B cell (primary cell): ENCODE measurements at regions of chr1 and their contacts with region 1.

Region 1: DNA sequence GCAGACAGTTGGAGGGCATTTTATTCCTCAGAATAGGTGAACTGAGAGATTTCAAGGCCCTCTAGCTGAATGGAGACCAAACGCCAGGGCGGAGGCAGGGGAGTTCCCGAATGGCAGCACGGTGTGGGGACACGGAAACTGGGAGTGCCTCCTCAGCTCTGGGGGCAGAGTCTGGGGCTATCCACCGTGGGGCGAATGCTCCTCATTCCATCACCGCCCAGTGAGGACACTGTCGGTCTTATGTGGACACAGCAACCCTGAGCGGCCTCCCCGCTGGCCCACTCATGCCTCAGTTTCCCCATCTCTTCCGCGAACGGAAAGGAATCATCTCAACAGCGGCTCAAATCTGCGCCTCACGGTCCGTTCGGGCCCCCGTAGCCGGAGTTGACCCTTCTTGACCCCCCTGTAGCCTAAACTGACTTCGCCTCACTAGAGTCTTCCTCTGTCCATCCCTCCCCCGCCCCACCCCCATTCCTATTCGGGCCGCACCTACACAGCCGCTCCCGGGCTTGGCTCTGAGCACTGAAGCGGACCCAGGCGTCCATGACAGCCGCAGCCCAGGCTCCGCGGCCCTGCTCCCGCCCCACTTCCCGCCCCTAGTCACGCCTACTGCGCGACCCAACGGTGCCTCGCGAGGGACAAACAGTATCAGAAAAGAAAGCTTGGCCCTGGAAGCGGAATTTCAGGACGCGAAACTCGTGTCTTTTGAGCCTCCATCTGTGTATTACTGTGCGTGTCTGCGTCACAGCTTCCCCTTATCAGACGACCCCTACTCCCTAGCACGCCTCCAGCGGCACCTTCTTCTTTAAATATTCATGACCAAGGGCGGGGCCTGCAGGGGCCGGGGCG is at the start of gene PEX11B:
- DNase-seq: peak; percentile 97
- ATAC-seq: peak; percentile 90
- H3K4me3 ChIP-seq: peak within 1 kb of the TSS; percentile 69 to 98 (median 80)
- H3K4me3 Mint-ChIP-seq: peak within 1 kb of the TSS; percentile 92
- H3K27ac ChIP-seq: peak within 1 kb of the TSS; percentile 74 to 79
- H3K27ac Mint-ChIP-seq: peak within 1 kb of the TSS; percentile 95
- H3K4me1 ChIP-seq: peaks cover 15 to 24% of the 10 kb centered on the region in 2 donors
- H3K4me1 Mint-ChIP-seq: peaks cover 36% of the 10 kb centered on the region
- H3K27me3 ChIP-seq: no peaks in the 10 kb centered on the region
- H3K27me3 Mint-ChIP-seq: no peaks in the 10 kb centered on the region
- CTCF ChIP-seq: no peak
- total RNA-seq, gene PEX11B: 39.1 and 48.1 TPM in 2 replicates

Region 2: DNA sequence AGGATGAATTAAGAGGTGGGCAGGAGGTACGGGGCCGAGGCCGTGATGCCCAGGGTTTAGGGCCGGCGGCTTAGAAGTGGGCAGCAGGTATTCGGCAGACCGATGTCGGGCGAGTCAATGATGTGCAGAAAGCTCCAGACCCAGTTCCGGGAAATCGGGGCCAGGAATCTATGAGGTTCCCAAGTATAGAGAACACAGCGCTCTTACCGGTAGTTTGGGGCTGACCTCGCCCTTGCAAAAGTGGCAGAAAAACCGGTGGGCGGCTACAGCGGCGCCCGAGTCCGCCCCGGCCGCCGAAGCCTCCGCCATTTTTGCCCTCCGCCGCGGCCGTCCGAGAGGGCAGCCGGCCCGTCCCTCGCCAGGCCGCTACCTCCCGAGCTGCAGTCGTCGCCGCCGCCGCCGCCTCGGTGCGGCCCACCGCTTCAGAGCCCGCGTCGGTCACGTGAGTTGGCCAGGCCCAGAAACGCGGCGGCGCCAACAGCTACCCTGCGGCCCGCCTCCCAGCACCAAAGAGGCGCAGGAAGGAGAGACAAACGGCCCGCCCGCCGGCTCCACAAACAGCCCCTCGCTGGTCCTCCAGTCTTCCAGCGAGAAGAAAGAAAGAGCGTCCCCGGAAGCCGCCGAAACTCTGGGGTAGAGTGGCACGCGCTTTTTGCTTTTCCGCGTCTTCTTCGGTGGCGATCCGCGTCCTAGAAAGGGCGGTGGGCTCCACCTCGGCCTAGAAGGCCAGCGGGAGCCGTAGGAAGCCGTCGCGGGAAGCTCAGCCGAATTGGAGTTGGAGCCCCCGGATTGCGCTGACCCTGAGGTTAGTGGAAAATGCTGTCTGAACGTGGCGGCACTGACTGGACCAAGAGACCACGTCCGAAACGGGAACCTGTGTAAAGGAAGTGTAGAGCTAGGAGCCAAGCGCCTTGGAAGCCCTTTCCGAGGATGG is 94.5 kb before region 1 on chr1 and contains the starts of genes POLR3C and RNF115:
- CTCF ChIA-PET with region 1: no interaction called
- POLR2A ChIA-PET with region 1: interaction called, 3 read pairs
- intact Hi-C with region 1: loop called (anchors 2 kb)
- DNase-seq: peak; percentile 91
- ATAC-seq: peak; percentile 95
- H3K4me3 ChIP-seq: peak within 1 kb of the TSS; percentile 66 to 97 (median 82)
- H3K4me3 Mint-ChIP-seq: peak within 1 kb of the TSS; percentile 98
- H3K27ac ChIP-seq: peak within 1 kb of the TSS; percentile 61 to 89
- H3K27ac Mint-ChIP-seq: peak within 1 kb of the TSS; percentile 97
- H3K4me1 ChIP-seq: peaks cover 12 to 13% of the 10 kb centered on the region in 2 donors
- H3K4me1 Mint-ChIP-seq: peaks cover 28% of the 10 kb centered on the region
- H3K27me3 ChIP-seq: no peaks in the 10 kb centered on the region
- H3K27me3 Mint-ChIP-seq: no peaks in the 10 kb centered on the region
- CTCF ChIP-seq: no peak
- total RNA-seq, gene POLR3C: 48.0 and 49.3 TPM in 2 replicates
- total RNA-seq, gene RNF115: 19.8 and 21.7 TPM in 2 replicates

Region 3: DNA sequence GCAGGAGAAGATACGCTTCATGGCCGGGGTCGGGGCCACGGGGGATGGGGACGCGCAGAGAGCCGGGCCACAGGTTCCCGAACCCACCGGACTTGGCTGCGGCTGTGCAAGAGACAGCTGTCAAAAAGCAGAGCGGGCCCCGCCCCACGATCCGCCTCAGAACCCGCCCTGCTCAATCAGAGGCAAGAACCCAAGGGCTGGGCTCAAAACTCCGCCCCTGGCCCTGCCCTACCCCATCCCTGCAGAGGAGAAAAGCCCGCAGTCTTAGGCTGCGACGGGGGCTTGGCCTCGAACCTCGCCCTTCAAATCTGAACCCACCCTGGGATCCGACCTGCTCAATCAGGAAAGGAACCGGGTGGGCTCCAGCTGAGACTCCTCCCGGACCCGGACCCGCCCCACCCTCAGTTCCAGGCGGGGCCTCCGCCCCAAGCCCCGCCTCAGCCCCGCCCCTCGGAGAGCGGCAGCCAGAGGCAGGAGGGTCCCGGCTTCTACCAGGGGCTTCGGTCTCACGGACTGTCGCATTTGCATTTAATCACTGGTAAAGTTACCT is 32.6 kb before region 1 on chr1 and contains the start of gene ANKRD35:
- CTCF ChIA-PET with region 1: interaction called, 3 read pairs
- POLR2A ChIA-PET with region 1: interaction called, 4 read pairs
- intact Hi-C with region 1: loop called (anchors 1 kb)
- DNase-seq: peak; percentile 91
- ATAC-seq: peak; percentile 99
- H3K4me3 ChIP-seq: peak within 1 kb of the TSS; percentile 12 to 84 (median 63)
- H3K4me3 Mint-ChIP-seq: peak within 1 kb of the TSS; percentile 87
- H3K27ac ChIP-seq: no peak within 1 kb of the TSS
- H3K27ac Mint-ChIP-seq: peak within 1 kb of the TSS; percentile 26
- H3K4me1 ChIP-seq: peaks cover 11 to 12% of the 10 kb centered on the region in 2 donors
- H3K4me1 Mint-ChIP-seq: peaks cover 22% of the 10 kb centered on the region
- H3K27me3 ChIP-seq: peaks cover 0 to 24% (median 18%) of the 10 kb centered on the region in 4 experiments
- H3K27me3 Mint-ChIP-seq: peaks cover 29% of the 10 kb centered on the region
- CTCF ChIP-seq: no peak
- total RNA-seq, gene ANKRD35: not detected in 2 replicates

Region 4: DNA sequence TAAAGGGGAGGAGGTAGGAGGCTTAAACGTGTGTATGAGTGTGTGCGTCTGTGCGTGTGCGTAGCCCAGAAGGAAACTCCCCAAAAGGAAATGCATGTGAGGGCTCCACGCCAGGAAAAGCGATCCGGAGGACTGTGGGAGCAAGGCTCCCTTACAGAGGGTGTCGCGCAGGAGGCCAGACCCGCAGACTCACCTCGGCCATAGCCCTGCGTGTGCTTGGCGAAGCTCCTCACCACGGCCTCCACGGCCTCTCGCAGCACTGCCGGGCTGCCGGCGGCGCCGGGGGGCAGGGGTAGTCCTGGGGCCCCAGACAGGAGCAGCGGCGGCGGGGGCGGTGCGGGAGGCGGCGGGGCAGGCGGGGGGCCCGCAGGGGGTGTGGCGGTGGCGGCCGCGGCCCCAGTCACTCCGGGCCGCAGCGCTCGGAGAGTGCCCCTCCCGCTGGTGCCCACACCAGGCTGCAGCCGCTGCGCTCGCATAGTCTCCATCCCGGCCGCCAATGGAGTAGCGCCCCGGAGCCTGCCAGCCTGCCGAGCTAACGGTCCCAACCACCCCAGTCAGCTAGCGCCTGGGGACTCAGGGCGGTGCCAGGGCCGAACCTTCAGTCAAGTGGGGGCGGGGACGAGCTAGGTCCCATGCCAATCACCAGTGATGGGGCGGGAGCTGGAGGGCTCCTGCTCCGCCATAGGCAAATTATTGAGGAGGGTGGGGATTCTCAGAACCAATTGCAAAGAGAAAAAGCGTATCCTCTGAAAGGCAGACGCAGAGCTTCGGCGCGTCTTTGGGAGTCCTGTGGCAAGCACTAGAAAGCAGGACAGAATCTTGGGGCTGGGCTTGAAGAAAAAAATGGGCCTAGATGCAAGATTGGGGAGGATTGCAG is 39.3 kb after region 1 on chr1 and contains the start of gene LIX1L:
- CTCF ChIA-PET with region 1: no interaction called
- POLR2A ChIA-PET with region 1: interaction called, 19 read pairs
- intact Hi-C with region 1: loop called (anchors 1 kb)
- DNase-seq: peak; percentile 96
- ATAC-seq: peak; percentile 89
- H3K4me3 ChIP-seq: peak within 1 kb of the TSS; percentile 64 to 88 (median 74)
- H3K4me3 Mint-ChIP-seq: peak within 1 kb of the TSS; percentile 99
- H3K27ac ChIP-seq: peak within 1 kb of the TSS; percentile 36 to 83
- H3K27ac Mint-ChIP-seq: peak within 1 kb of the TSS; percentile 96
- H3K4me1 ChIP-seq: peaks cover 45 to 65% of the 10 kb centered on the region in 2 donors
- H3K4me1 Mint-ChIP-seq: peaks cover 76% of the 10 kb centered on the region
- H3K27me3 ChIP-seq: no peaks in the 10 kb centered on the region
- H3K27me3 Mint-ChIP-seq: no peaks in the 10 kb centered on the region
- CTCF ChIP-seq: no peak
- total RNA-seq, gene LIX1L: 31.7 and 32.2 TPM in 2 replicates

Region 5: GRCh38 chr1:145963995-145964901 is 45.9 kb after region 1 on chr1 and contains the starts of genes ANKRD34A and POLR3GL:
- CTCF ChIA-PET with region 1: interaction called, 4 read pairs
- POLR2A ChIA-PET with region 1: interaction called, 19 read pairs
- intact Hi-C with region 1: loop called (anchors 1 kb)
- DNase-seq: peak; percentile 92
- ATAC-seq: peak; percentile 91
- H3K4me3 ChIP-seq: peak within 1 kb of the TSS; percentile 54 to 91 (median 87)
- H3K4me3 Mint-ChIP-seq: peak within 1 kb of the TSS; percentile 95
- H3K27ac ChIP-seq: peak within 1 kb of the TSS; percentile 59 to 85
- H3K27ac Mint-ChIP-seq: peak within 1 kb of the TSS; percentile 97
- H3K4me1 ChIP-seq: peaks cover 35 to 53% of the 10 kb centered on the region in 2 donors
- H3K4me1 Mint-ChIP-seq: peaks cover 61% of the 10 kb centered on the region
- H3K27me3 ChIP-seq: no peaks in the 10 kb centered on the region
- H3K27me3 Mint-ChIP-seq: no peaks in the 10 kb centered on the region
- CTCF ChIP-seq: no peak
- total RNA-seq, gene ANKRD34A: 1.8 and 2.8 TPM in 2 replicates
- total RNA-seq, gene POLR3GL: 26.3 and 33.3 TPM in 2 replicates